ENCODE measurements at regions of chr17 and their contacts with region 1.

Region 1: GRCh38 chr17:82236142-82236981 is 7.5 kb downstream of the SLC16A3 start:
- DNase-seq: peak; percentile 97
- H3K4me3 ChIP-seq: no peak overlapping the region; a peak in 1 of 4 replicates
- H3K27ac ChIP-seq: peak overlapping the region in 1 of 2 experiments; percentile 6; a peak in 1 of 4 replicates
- H3K4me1 ChIP-seq: peaks cover 18 to 33% of the 10 kb centered on the region in 2 experiments; a peak in 3 of 4 replicates
- H3K27me3 ChIP-seq: no peaks in the 10 kb centered on the region
- CTCF ChIP-seq: peak; percentile 99
- EP300 ChIP-seq: no peak
- RAD21 ChIP-seq: peak; percentile 84

Region 2: DNA sequence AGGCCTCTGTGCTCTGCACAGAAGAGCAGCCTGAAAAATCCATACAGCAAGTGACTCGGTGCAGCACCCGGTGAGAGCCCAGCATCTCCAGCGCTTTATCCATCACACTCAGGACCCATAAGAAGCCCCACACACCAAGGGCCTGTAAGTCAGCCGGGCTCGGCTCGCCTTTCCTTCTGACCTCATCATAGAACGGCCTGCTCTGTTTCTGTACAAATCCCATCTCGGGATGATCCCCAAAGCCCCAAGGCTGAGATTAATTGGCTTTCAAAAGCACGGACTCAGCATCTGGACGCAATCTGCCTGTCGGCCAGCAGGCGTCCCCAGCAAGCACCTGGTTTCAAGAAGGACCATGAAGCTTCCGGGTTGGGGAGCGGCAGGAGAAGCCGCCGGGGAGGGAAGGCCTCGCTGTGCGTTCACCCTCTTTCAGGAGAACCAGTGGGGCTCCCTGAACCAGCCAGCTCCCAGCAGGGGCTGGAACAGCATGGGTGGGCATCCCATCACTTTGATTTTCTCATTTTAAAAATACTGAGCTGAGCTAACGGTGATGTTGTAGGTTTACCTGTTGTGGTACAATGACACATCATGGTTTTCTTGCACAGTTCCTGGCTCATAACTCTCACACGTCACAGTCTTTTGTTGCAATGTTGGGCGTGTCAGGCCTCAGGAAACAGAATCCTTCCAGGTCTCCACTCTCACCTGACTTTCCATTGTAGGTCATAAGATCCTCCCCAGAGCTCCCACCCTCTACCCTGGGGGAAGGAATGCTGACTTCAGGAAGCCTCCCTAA is 30.4 kb before region 1 on chr17:
- CTCF ChIA-PET with region 1: interaction called, 33 read pairs
- POLR2A ChIA-PET with region 1: interaction called, 3 read pairs
- DNase-seq: peak; percentile 92
- H3K4me3 ChIP-seq: peak overlapping the region in 1 of 2 experiments; percentile 8; a peak in 1 of 4 replicates
- H3K27ac ChIP-seq: peak overlapping the region; percentile 64 to 70
- H3K4me1 ChIP-seq: peaks cover 15 to 19% of the 10 kb centered on the region in 2 experiments; a peak in 3 of 4 replicates
- H3K27me3 ChIP-seq: no peaks in the 10 kb centered on the region
- CTCF ChIP-seq: peak; percentile 97
- EP300 ChIP-seq: no peak
- RAD21 ChIP-seq: peak; percentile 64

Region 3: GRCh38 chr17:82225368-82226029 is 10.9 kb before region 1 on chr17:
- CTCF ChIA-PET with region 1: interaction called, 45 read pairs
- POLR2A ChIA-PET with region 1: interaction called, 7 read pairs
- DNase-seq: no peak
- H3K4me3 ChIP-seq: no peak overlapping the region
- H3K27ac ChIP-seq: no peak overlapping the region
- H3K4me1 ChIP-seq: peaks cover 0 to 4% of the 10 kb centered on the region in 2 experiments; a peak in 1 of 4 replicates
- H3K27me3 ChIP-seq: no peaks in the 10 kb centered on the region
- CTCF ChIP-seq: no peak
- EP300 ChIP-seq: no peak
- RAD21 ChIP-seq: no peak

Region 4: GRCh38 chr17:82283208-82283749 is 46.9 kb after region 1 on chr17:
- CTCF ChIA-PET with region 1: interaction called, 24 read pairs
- POLR2A ChIA-PET with region 1: interaction called, 5 read pairs
- DNase-seq: peak; percentile 96
- H3K4me3 ChIP-seq: no peak overlapping the region
- H3K27ac ChIP-seq: peak overlapping the region in 1 of 2 experiments; percentile 39; a peak in 1 of 4 replicates
- H3K4me1 ChIP-seq: peaks cover 23 to 27% of the 10 kb centered on the region in 2 experiments; a peak in 3 of 4 replicates
- H3K27me3 ChIP-seq: no peaks in the 10 kb centered on the region
- CTCF ChIP-seq: no peak
- EP300 ChIP-seq: peak in 1 of 2 experiments; percentile 69; a peak in 3 of 4 replicates
- RAD21 ChIP-seq: no peak; the same call in 1 of the 2 replicates

Region 5: GRCh38 chr17:82332669-82333278 is 96.4 kb after region 1 on chr17:
- CTCF ChIA-PET with region 1: interaction called, 78 read pairs
- POLR2A ChIA-PET with region 1: no interaction called
- DNase-seq: peak; percentile 78
- H3K4me3 ChIP-seq: peak overlapping the region; percentile 13 to 31; a peak in 2 of 4 replicates
- H3K27ac ChIP-seq: no peak overlapping the region
- H3K4me1 ChIP-seq: peaks cover 18 to 45% of the 10 kb centered on the region in 2 experiments; a peak in 3 of 4 replicates
- H3K27me3 ChIP-seq: no peaks in the 10 kb centered on the region; the same call in none of the 2 replicates
- CTCF ChIP-seq: no peak
- EP300 ChIP-seq: no peak
- RAD21 ChIP-seq: no peak

Measured in SK-N-SH (cell line).